Sigmoid colon (tissue), 7 donors: ENCODE measurements at regions of chr6 and their contacts with region 1.

Region 1: DNA sequence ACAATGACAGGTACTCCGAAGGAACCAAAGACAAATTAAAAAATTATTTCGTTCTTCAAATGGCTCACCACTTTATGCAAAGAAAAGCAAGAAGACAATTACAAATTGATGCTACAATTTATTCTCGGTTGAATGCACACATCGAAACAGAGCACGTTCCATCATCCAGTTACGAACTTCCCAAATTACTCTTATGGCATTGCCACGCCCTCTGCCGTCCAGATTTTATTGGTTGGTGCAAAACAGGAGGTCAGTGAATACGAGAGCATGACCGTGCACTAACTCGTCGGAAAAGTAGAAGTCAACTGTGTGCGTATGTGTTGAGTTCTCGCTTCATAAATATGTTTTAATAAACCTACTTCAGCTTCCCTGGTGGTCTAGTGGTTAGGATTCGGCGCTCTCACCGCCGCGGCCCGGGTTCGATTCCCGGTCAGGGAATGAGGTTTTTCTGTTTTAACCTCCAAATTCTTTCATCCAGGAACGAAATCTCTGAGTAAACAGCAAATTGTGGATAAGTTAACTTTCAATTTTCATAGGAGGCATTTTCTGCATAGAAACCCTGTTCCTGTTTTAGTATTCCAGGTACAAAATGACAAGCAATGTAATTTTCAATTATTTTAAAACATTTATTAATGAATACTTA is 23.2 kb downstream of the ZNF311 start:
- DNase-seq: peak; percentile 93
- H3K4me3 ChIP-seq: peak overlapping the region; percentile 41 to 75 (median 54)
- H3K27ac ChIP-seq: peak overlapping the region; percentile 74 to 88 (median 83)
- H3K4me1 ChIP-seq: peaks cover 0 to 25% (median 6%) of the 10 kb centered on the region in 4 donors
- H3K27me3 ChIP-seq: peaks cover 4 to 16% (median 6%) of the 10 kb centered on the region in 3 donors
- CTCF ChIP-seq: no peak
- EP300 ChIP-seq: no peak
- POLR2A ChIP-seq: no peak

Region 2: DNA sequence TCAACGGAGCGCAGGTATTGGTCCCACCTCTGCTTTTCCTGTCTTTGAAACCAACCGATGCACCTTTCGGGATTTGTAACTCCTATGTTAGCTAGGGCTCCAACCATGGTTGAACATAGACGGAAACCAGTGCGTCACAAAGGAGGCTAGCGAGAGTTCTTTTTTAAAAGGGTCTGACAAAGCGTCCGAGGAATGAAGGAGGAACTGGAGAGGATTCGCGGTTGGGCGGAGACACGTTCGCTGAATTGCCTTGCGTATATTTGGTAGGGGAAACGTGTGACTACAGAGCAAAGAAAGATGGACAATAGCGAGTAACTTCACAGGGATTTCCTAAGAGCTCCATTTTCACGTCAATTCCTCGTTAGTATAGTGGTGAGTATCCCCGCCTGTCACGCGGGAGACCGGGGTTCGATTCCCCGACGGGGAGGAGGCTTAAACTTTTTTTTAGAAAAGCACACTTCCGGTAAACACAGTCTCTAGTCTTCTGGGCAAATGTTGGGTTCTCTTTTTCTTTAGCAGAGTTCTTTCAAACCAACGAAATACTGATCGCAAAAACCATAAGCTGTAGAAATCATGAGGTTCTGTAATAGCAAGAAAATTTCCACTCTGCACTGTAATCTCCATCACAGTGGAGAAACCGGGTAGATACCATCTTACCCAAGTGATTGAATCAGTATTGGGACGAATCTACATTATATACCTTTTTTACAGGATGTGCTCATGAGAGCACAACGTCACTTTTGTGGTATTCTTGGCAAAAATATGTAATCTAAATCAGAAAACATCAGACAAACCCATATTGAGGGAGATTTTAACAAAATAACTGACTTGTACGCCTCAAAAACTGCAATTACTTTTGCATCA is 1502.4 kb before region 1 on chr6:
- intact Hi-C with region 1: loop called (anchors 5 kb)
- DNase-seq: peak; percentile 91
- H3K4me3 ChIP-seq: peak overlapping the region; percentile 64 to 74 (median 68)
- H3K27ac ChIP-seq: peak overlapping the region; percentile 91 to 96 (median 95)
- H3K4me1 ChIP-seq: peaks cover 0 to 14% (median 9%) of the 10 kb centered on the region in 4 donors
- H3K27me3 ChIP-seq: no peaks in the 10 kb centered on the region
- CTCF ChIP-seq: no peak
- EP300 ChIP-seq: no peak
- POLR2A ChIP-seq: no peak

Region 3: DNA sequence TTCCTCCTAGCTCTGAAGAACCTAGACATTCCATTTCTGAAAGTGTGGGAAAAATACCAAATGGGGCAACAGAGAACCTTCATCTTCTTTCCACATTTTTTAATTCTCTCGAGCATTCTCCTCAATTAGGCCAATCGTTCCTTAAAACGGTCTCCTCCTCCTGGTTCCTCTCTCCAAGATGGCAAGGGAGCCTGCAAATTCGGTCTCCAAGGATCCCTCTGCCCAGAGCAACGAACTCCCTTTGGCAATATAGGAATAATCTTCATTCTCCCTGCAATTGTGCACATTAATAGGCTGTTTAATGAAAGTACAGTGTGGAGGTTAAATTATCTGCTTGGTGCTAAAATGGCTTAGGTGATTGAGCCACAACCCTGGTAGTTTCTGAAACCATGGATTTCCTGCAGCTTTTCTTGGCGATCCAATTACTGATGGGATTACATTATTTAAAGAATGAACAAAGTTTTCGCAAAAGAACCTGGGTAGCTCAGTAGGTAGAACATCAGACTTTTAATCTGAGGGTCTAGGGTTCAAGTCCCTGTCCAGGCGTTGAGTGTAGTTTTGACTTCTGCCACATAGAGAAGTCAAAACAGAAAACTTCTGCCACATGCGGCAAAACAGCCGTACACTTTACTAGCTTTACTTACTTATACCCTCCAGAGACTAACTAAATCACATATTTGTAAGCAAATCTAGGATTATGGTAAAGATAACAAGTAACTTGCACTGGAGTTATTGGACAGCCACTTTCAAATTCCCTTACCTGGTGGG is 1406.2 kb before region 1 on chr6:
- intact Hi-C with region 1: no loop called
- DNase-seq: no peak
- H3K4me3 ChIP-seq: no peak overlapping the region
- H3K27ac ChIP-seq: no peak overlapping the region
- H3K4me1 ChIP-seq: no peaks in the 10 kb centered on the region
- H3K27me3 ChIP-seq: peaks cover 0 to 15% (median 0%) of the 10 kb centered on the region in 3 donors
- CTCF ChIP-seq: no peak
- EP300 ChIP-seq: no peak
- POLR2A ChIP-seq: no peak

Region 4: GRCh38 chr6:28335564-28336283 is 646.2 kb before region 1 on chr6 and contains the start of gene ZSCAN31:
- intact Hi-C with region 1: loop called (anchors 10 kb)
- DNase-seq: peak; percentile 99
- H3K4me3 ChIP-seq: peak within 1 kb of the TSS; percentile 54 to 73 (median 65)
- H3K27ac ChIP-seq: peak within 1 kb of the TSS; percentile 91 to 99 (median 95)
- H3K4me1 ChIP-seq: peaks cover 4 to 35% (median 19%) of the 10 kb centered on the region in 4 donors
- H3K27me3 ChIP-seq: no peaks in the 10 kb centered on the region
- CTCF ChIP-seq: no peak
- EP300 ChIP-seq: peak in 1 of 4 donors; percentile 31
- POLR2A ChIP-seq: peak; percentile 89 to 91
- total RNA-seq, gene ZSCAN31: 22.8 to 41.7 (median 30.8) TPM

Region 5: GRCh38 chr6:28863604-28864320 is 118.2 kb before region 1 on chr6:
- intact Hi-C with region 1: loop called (anchors 1 kb)
- DNase-seq: peak; percentile 86
- H3K4me3 ChIP-seq: peak overlapping the region; percentile 62 to 73 (median 67)
- H3K27ac ChIP-seq: peak overlapping the region; percentile 71 to 81 (median 79)
- H3K4me1 ChIP-seq: peaks cover 0 to 21% (median 10%) of the 10 kb centered on the region in 4 donors
- H3K27me3 ChIP-seq: no peaks in the 10 kb centered on the region
- CTCF ChIP-seq: no peak
- EP300 ChIP-seq: no peak
- POLR2A ChIP-seq: no peak

Region 6: GRCh38 chr6:28940858-28941680 is 40.9 kb before region 1 on chr6:
- intact Hi-C with region 1: loop called (anchors 1 kb)
- DNase-seq: peak; percentile 90
- H3K4me3 ChIP-seq: peak overlapping the region; percentile 46 to 61 (median 53)
- H3K27ac ChIP-seq: peak overlapping the region; percentile 66 to 84 (median 78)
- H3K4me1 ChIP-seq: peaks cover 0 to 24% (median 15%) of the 10 kb centered on the region in 4 donors
- H3K27me3 ChIP-seq: no peaks in the 10 kb centered on the region
- CTCF ChIP-seq: no peak
- EP300 ChIP-seq: no peak
- POLR2A ChIP-seq: no peak

Region 7: GRCh38 chr6:29016559-29017427 is 34.8 kb after region 1 on chr6:
- intact Hi-C with region 1: loop called (anchors 2 kb)
- DNase-seq: peak; percentile 86
- H3K4me3 ChIP-seq: peak overlapping the region; percentile 41 to 62 (median 50)
- H3K27ac ChIP-seq: peak overlapping the region; percentile 19 to 61 (median 44)
- H3K4me1 ChIP-seq: peaks cover 0 to 24% (median 11%) of the 10 kb centered on the region in 4 donors
- H3K27me3 ChIP-seq: peaks cover 9 to 22% (median 17%) of the 10 kb centered on the region in 3 donors
- CTCF ChIP-seq: peak; percentile 70 to 80 (median 74)
- EP300 ChIP-seq: no peak
- POLR2A ChIP-seq: no peak